ENCODE measurements at regions of chr7 and their contacts with region 1.

Region 1: DNA sequence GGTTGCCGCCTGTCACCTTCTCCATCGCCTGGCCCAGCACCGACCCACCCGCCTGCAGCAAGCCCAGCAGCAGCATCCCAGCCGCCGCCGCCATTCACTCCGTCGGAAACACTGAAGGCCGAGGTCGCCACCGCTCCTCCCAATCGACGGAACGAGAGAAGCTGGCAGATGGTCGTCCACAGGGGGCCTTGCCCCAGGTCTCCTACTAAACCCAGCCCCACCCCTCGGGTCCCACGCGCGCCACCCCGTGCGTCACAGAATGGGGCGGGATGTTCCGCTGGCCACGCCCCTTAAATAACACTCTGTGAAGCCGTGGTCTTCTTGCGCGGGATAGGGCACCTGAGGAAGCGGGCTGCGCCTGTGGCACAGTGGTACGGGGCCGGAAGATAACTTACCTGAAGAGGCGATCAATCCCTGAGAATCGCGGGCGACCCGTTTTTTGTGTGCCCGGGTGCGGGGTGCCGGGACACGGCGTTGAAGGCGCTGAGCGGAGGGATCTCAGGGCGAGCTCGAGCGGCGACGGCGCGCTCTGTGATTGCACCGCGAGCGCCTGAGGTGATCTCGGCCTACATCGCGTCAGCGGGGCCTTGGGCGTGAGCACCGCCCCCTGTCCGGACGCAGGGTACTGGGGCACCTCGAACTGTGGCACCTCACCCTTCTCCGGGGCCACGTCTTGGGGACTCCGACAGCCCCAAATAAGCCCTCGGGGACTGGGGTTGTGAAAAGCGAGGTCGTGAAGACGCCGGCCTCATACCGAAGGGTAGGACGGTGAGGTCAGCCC is at the start of gene CYP51A1:
- DNase-seq: peak; percentile 74
- H3K4me3 ChIP-seq: peak within 1 kb of the TSS; percentile 88 to 95 (median 94)
- H3K27ac ChIP-seq: peak within 1 kb of the TSS; percentile 95 to 98 (median 97)
- H3K4me1 ChIP-seq: peaks cover 0 to 36% (median 8%) of the 10 kb centered on the region in 3 donors
- H3K27me3 ChIP-seq: no peaks in the 10 kb centered on the region
- CTCF ChIP-seq: peak in 1 of 6 experiments; percentile 9
- POLR2A ChIP-seq: peak in 3 of 4 donors; percentile 75 to 83 (median 80)
- total RNA-seq, gene CYP51A1: 79.0 to 168 (median 119) TPM

Region 2: GRCh38 chr7:91852263-91852741 is 282.2 kb before region 1 on chr7:
- intact Hi-C with region 1: no loop called
- DNase-seq: no peak
- H3K4me3 ChIP-seq: no peak overlapping the region
- H3K27ac ChIP-seq: no peak overlapping the region
- H3K4me1 ChIP-seq: peaks cover 0 to 54% (median 4%) of the 10 kb centered on the region in 3 donors
- H3K27me3 ChIP-seq: no peaks in the 10 kb centered on the region
- CTCF ChIP-seq: peak in 3 of 6 experiments; percentile 26 to 61 (median 31)
- POLR2A ChIP-seq: no peak

Region 3: GRCh38 chr7:92245487-92246362 is 111.3 kb after region 1 on chr7 and contains the starts of genes ANKIB1 and KRIT1:
- intact Hi-C with region 1: loop called (anchors 10 kb)
- DNase-seq: peak; percentile 21
- H3K4me3 ChIP-seq: peak within 1 kb of the TSS; percentile 71 to 97 (median 92)
- H3K27ac ChIP-seq: peak within 1 kb of the TSS; percentile 91 to 97 (median 94)
- H3K4me1 ChIP-seq: peaks cover 6 to 48% (median 19%) of the 10 kb centered on the region in 3 donors
- H3K27me3 ChIP-seq: no peaks in the 10 kb centered on the region
- CTCF ChIP-seq: peak in 4 of 6 experiments; percentile 0 to 32 (median 19)
- POLR2A ChIP-seq: peak in 1 of 4 donors; percentile 57
- total RNA-seq, gene ANKIB1: 16.0 to 34.3 (median 21.7) TPM
- total RNA-seq, gene KRIT1: 33.9 to 81.5 (median 56.8) TPM

Region 4: GRCh38 chr7:92528188-92528957 is 393.9 kb after region 1 on chr7 and contains the starts of genes PEX1 and RBM48:
- intact Hi-C with region 1: no loop called
- DNase-seq: peak; percentile 82
- H3K4me3 ChIP-seq: peak within 1 kb of the TSS; percentile 81 to 93 (median 89)
- H3K27ac ChIP-seq: peak within 1 kb of the TSS; percentile 89 to 96 (median 94)
- H3K4me1 ChIP-seq: peaks cover 13 to 46% (median 15%) of the 10 kb centered on the region in 3 donors
- H3K27me3 ChIP-seq: no peaks in the 10 kb centered on the region
- CTCF ChIP-seq: peak in 5 of 6 experiments; percentile 9 to 75 (median 26)
- POLR2A ChIP-seq: peak in 3 of 4 donors; percentile 19 to 44 (median 35)
- total RNA-seq, gene PEX1: 9.3 to 25.0 (median 13.2) TPM
- total RNA-seq, gene RBM48: 5.3 to 11.1 (median 7.3) TPM

Measured in esophagus squamous epithelium (tissue), 5 donors.